Gastrocnemius medialis (tissue), 4 donors: ENCODE measurements at regions of chr4 and their contacts with region 1.

Region 1: GRCh38 chr4:67087897-67088296 is 457.4 kb downstream of the CENPC start:
- DNase-seq: no peak
- ATAC-seq: no peak
- H3K4me3 ChIP-seq: no peak overlapping the region
- H3K27ac ChIP-seq: no peak overlapping the region
- H3K4me1 ChIP-seq: no peaks in the 10 kb centered on the region
- H3K27me3 ChIP-seq: no peaks in the 10 kb centered on the region
- CTCF ChIP-seq: peak in 3 of 5 experiments; percentile 18 to 35 (median 24)
- POLR2A ChIP-seq: no peak

Region 2: GRCh38 chr4:67327262-67328017 is 239.5 kb after region 1 on chr4:
- in situ Hi-C with region 1: loop called in 1 of 4 experiments (anchors 10 kb)
- intact Hi-C with region 1: loop called (anchors 5 kb)
- DNase-seq: no peak
- ATAC-seq: no peak
- H3K4me3 ChIP-seq: no peak overlapping the region
- H3K27ac ChIP-seq: no peak overlapping the region
- H3K4me1 ChIP-seq: no peaks in the 10 kb centered on the region
- H3K27me3 ChIP-seq: no peaks in the 10 kb centered on the region
- CTCF ChIP-seq: peak in 4 of 5 experiments; percentile 39 to 79 (median 62)
- POLR2A ChIP-seq: no peak